ENCODE measurements at regions of chr11 and their contacts with region 1.

Region 1: DNA sequence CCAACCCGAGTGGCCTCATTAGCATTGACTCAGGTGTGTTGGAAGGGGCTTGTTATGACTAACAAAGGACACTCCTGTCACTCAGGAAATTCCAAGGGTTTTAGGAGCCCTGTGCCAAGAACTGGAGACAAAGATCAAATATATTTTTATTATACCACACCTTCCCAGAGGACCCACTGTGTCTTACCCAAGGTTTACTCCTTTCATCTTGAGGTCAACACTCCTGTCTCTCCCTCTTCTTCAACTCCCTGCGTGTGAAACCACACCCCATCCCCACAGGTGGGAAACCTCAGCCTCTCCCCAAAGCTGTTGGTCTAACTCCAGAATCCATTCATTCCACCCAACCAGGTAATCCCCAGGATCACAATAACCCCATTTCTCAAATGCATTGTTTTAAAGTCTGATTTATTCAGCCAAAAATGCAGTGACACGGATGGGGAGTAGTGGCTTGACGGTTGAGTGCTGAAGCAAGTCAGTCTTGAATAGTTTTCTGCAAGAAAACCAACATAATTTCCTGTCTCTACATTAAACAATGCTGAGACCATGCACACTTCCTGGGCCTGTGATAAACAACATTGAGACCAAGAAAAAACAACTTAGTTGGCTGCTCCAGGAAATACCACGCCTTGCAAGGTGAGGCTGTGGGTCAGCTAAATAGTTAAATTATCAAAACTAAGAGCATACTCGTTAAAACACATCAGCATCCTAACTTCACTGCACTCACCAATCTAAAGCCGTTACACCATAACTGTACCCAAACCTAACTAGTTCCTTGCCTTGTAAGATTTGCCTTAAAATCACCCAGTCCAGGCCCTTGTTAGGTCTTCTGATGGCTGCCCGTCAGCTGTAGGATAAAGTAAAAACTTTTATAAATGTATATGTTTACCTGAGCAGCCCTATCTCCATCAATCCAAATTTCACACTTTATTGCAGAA is 38.5 kb upstream of the SPON1 start:
- DNase-seq: peak in 8 of 9 experiments; percentile 19 to 66 (median 30)
- ATAC-seq: peak; percentile 93
- H3K4me3 ChIP-seq: peak overlapping the region; percentile 12
- H3K4me3 Mint-ChIP-seq: peak overlapping the region; percentile 70
- H3K27ac ChIP-seq: peak overlapping the region; percentile 32 to 86
- H3K27ac Mint-ChIP-seq: peak overlapping the region; percentile 96
- H3K4me1 ChIP-seq: peaks cover 49% of the 10 kb centered on the region
- H3K4me1 Mint-ChIP-seq: peaks cover 62% of the 10 kb centered on the region
- H3K27me3 ChIP-seq: no peaks in the 10 kb centered on the region
- H3K27me3 Mint-ChIP-seq: no peaks in the 10 kb centered on the region
- CTCF ChIP-seq: no peak

Region 2: GRCh38 chr11:12693479-12694181 is 1230.4 kb before region 1 on chr11:
- CTCF ChIA-PET with region 1: no interaction called
- POLR2A ChIA-PET with region 1: no interaction called
- intact Hi-C with region 1: no loop called
- DNase-seq: no peak
- ATAC-seq: no peak
- H3K4me3 ChIP-seq: no peak overlapping the region
- H3K4me3 Mint-ChIP-seq: no peak overlapping the region
- H3K27ac ChIP-seq: no peak overlapping the region
- H3K27ac Mint-ChIP-seq: no peak overlapping the region
- H3K4me1 ChIP-seq: peaks cover 5% of the 10 kb centered on the region
- H3K4me1 Mint-ChIP-seq: peaks cover 12% of the 10 kb centered on the region
- H3K27me3 ChIP-seq: peaks cover 2 to 5% of the 10 kb centered on the region in 2 experiments
- H3K27me3 Mint-ChIP-seq: peaks cover 72% of the 10 kb centered on the region
- CTCF ChIP-seq: no peak

Region 3: DNA sequence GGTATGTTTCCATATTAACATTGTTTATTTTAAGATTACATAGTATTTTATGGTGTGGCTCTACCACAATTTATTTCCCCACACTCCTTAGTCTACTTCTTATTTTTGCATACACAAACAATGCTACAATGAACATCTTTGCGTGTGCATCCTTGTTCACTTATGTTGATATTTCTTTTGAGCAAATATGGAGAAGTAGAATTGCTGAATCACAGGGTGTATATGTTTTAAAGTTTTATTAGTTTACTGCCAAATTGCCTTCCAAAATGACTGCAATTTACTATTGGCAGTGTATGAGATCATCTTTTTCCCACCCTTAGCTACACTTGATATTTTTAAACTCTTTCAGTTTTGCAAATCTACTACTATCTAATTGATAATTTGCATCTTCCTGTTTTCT is 294.2 kb before region 1 on chr11:
- CTCF ChIA-PET with region 1: no interaction called
- POLR2A ChIA-PET with region 1: no interaction called
- intact Hi-C with region 1: no loop called
- DNase-seq: no peak
- ATAC-seq: no peak
- H3K4me3 ChIP-seq: no peak overlapping the region
- H3K4me3 Mint-ChIP-seq: no peak overlapping the region
- H3K27ac ChIP-seq: no peak overlapping the region
- H3K27ac Mint-ChIP-seq: no peak overlapping the region
- H3K4me1 ChIP-seq: no peaks in the 10 kb centered on the region
- H3K4me1 Mint-ChIP-seq: no peaks in the 10 kb centered on the region
- H3K27me3 ChIP-seq: no peaks in the 10 kb centered on the region
- H3K27me3 Mint-ChIP-seq: peaks cover 22% of the 10 kb centered on the region
- CTCF ChIP-seq: no peak

Region 4: DNA sequence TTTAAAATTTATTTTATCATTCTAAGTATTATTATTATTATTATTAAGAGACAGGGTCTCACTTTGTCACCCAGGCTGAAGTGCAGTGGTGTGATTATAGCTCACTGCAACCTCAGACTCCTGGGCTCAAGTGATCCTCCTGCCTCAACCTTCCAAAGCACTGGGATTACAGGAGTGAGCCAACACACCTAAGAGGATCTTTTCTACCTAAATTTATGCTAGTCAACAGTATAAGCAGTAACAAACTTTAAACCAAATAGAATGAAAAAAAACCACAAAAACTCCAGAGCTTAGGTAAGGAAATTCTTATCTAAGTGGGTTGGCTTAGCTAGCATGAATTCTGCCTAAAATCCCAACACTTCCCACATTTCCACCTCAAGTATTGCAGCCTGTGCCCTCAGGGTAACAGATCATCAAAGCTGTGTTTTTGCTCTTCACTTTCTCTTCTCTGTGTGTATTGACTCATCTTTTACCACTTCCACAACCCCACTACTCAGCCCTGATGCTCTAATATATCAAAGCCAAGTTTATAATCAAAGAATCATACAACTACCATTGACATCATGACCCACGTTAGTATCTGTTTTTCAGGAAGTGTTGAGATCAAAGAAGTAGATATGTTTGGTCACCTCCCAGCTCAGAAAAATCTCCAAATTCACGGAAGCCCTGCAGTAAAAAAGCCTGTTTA is 55.1 kb before region 1 on chr11:
- CTCF ChIA-PET with region 1: interaction called, 6 read pairs
- POLR2A ChIA-PET with region 1: interaction called, 15 read pairs
- intact Hi-C with region 1: loop called (anchors 5 kb)
- DNase-seq: peak in 5 of 9 experiments; percentile 12 to 90 (median 57)
- ATAC-seq: peak; percentile 88
- H3K4me3 ChIP-seq: no peak overlapping the region
- H3K4me3 Mint-ChIP-seq: peak overlapping the region; percentile 1
- H3K27ac ChIP-seq: peak overlapping the region; percentile 54 to 82
- H3K27ac Mint-ChIP-seq: peak overlapping the region; percentile 93
- H3K4me1 ChIP-seq: peaks cover 21% of the 10 kb centered on the region
- H3K4me1 Mint-ChIP-seq: peaks cover 33% of the 10 kb centered on the region
- H3K27me3 ChIP-seq: no peaks in the 10 kb centered on the region
- H3K27me3 Mint-ChIP-seq: no peaks in the 10 kb centered on the region
- CTCF ChIP-seq: no peak

Region 5: GRCh38 chr11:13874597-13874996 is 49.4 kb before region 1 on chr11:
- CTCF ChIA-PET with region 1: interaction called, 6 read pairs
- POLR2A ChIA-PET with region 1: interaction called, 15 read pairs
- intact Hi-C with region 1: loop called in 1 of 2 experiments (anchors 5 kb)
- DNase-seq: no peak
- ATAC-seq: no peak
- H3K4me3 ChIP-seq: no peak overlapping the region
- H3K4me3 Mint-ChIP-seq: no peak overlapping the region
- H3K27ac ChIP-seq: no peak overlapping the region
- H3K27ac Mint-ChIP-seq: no peak overlapping the region
- H3K4me1 ChIP-seq: peaks cover 11% of the 10 kb centered on the region
- H3K4me1 Mint-ChIP-seq: peaks cover 18% of the 10 kb centered on the region
- H3K27me3 ChIP-seq: no peaks in the 10 kb centered on the region
- H3K27me3 Mint-ChIP-seq: no peaks in the 10 kb centered on the region
- CTCF ChIP-seq: no peak

Region 6: DNA sequence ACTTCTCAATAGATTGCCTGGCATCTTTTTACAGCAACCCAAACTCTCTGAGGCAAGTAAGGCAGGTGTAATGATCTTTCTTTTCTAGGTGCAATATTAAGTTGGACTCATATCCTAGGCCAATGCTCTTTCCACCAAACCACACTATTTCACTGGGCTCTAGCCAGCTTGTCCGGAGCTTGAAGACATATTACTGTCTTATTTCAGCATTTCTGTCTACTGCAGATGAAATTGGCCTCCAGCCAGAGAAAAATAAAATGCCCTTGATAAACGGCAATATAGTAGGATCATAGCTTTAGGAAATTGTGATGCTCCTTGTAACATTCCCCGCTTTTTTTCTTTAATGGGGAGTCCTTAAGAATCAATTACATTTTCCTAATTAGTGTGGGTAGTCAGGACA is 86.7 kb after region 1 on chr11:
- CTCF ChIA-PET with region 1: no interaction called
- POLR2A ChIA-PET with region 1: no interaction called
- intact Hi-C with region 1: no loop called
- DNase-seq: no peak
- ATAC-seq: no peak
- H3K4me3 ChIP-seq: no peak overlapping the region
- H3K4me3 Mint-ChIP-seq: no peak overlapping the region
- H3K27ac ChIP-seq: no peak overlapping the region
- H3K27ac Mint-ChIP-seq: no peak overlapping the region
- H3K4me1 ChIP-seq: no peaks in the 10 kb centered on the region
- H3K4me1 Mint-ChIP-seq: no peaks in the 10 kb centered on the region
- H3K27me3 ChIP-seq: no peaks in the 10 kb centered on the region
- H3K27me3 Mint-ChIP-seq: no peaks in the 10 kb centered on the region
- CTCF ChIP-seq: no peak

Measured in CD8-positive, alpha-beta T cell (primary cell).